CD14-positive monocyte (primary cell): ENCODE measurements at regions of chr5 and their contacts with region 1.

Region 1: GRCh38 chr5:83473346-83474163 is 2.0 kb downstream of the VCAN start:
- DNase-seq: peak; percentile 76 to 78 (median 77)
- H3K4me3 ChIP-seq: peak overlapping the region; percentile 78 to 95 (median 81)
- H3K4me3 Mint-ChIP-seq: peak overlapping the region; percentile 100
- H3K27ac ChIP-seq: peak overlapping the region; percentile 85 to 91
- H3K27ac Mint-ChIP-seq: peak overlapping the region; percentile 93 to 99 (median 98)
- H3K4me1 ChIP-seq: peaks cover 37 to 61% of the 10 kb centered on the region in 2 donors
- H3K4me1 Mint-ChIP-seq: peaks cover 61% of the 10 kb centered on the region
- H3K27me3 ChIP-seq: peaks cover 7 to 18% of the 10 kb centered on the region in 2 donors
- H3K27me3 Mint-ChIP-seq: peaks cover 13 to 17% (median 13%) of the 10 kb centered on the region in 3 donors
- CTCF ChIP-seq: peak; percentile 91

Region 2: DNA sequence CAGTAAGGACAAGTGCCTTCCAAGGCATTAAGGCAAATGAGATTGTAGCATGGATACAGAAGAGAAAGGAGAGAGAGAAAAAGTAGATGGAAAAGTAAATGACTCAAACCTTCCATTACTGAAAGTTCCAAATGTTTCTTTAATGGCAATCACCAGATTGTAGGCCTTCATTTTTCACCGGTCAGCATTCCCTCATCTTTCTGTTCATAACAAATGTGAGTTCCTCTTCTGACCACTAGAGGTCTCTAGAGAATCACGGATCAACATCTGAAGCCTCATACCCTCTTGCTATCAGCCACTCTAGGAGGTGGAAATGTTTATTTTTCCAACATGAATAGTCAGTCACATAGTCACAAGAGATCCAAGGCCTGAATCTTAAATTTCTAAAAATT is 1121.8 kb before region 1 on chr5:
- intact Hi-C with region 1: loop called (anchors 5 kb)
- DNase-seq: peak; percentile 22 to 55 (median 46)
- H3K4me3 ChIP-seq: no peak overlapping the region
- H3K4me3 Mint-ChIP-seq: no peak overlapping the region
- H3K27ac ChIP-seq: no peak overlapping the region
- H3K27ac Mint-ChIP-seq: no peak overlapping the region
- H3K4me1 ChIP-seq: peaks cover under 1 to 4% of the 10 kb centered on the region in 2 donors
- H3K4me1 Mint-ChIP-seq: peaks cover 12% of the 10 kb centered on the region
- H3K27me3 ChIP-seq: no peaks in the 10 kb centered on the region
- H3K27me3 Mint-ChIP-seq: peaks cover 1% of the 10 kb centered on the region in 3 donors
- CTCF ChIP-seq: peak; percentile 93

Region 3: DNA sequence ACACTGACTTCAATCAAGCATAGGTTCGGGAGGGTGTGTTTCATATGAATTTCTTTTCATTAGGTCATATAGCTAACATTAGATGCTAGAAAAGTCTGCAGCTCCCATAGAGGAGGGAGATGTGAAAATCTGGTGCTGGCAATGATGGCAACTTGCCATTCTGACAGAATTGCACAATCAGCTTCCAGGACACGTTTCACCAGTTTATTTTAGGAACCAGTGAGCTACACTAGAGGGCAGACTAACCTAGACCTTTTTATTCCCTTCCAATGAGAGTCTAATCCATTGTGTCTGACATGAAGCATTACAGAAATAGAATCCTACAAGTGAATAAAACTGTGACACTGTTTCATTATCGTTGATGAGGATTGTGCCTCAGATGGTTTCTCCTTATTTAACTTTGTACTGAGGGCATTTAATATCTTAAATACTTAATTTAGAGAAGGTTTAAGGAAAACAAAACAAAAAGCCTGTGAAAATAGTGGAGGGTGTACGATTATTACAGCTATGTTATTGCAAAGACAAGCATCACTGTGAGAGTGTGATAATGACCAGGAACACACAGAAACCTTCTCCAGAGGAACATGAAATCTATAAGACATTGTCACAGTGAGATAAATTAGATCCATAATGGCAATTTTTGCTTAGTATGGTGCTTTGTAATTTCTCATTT is 832.1 kb before region 1 on chr5:
- intact Hi-C with region 1: loop called (anchors 2 to 5 kb)
- DNase-seq: peak; percentile 57 to 72 (median 64)
- H3K4me3 ChIP-seq: no peak overlapping the region
- H3K4me3 Mint-ChIP-seq: no peak overlapping the region
- H3K27ac ChIP-seq: no peak overlapping the region
- H3K27ac Mint-ChIP-seq: no peak overlapping the region
- H3K4me1 ChIP-seq: peaks cover 2 to 5% of the 10 kb centered on the region in 2 donors
- H3K4me1 Mint-ChIP-seq: peaks cover 8% of the 10 kb centered on the region
- H3K27me3 ChIP-seq: no peaks in the 10 kb centered on the region
- H3K27me3 Mint-ChIP-seq: peaks cover 0 to 5% (median 0%) of the 10 kb centered on the region in 3 donors
- CTCF ChIP-seq: peak; percentile 82

Region 4: DNA sequence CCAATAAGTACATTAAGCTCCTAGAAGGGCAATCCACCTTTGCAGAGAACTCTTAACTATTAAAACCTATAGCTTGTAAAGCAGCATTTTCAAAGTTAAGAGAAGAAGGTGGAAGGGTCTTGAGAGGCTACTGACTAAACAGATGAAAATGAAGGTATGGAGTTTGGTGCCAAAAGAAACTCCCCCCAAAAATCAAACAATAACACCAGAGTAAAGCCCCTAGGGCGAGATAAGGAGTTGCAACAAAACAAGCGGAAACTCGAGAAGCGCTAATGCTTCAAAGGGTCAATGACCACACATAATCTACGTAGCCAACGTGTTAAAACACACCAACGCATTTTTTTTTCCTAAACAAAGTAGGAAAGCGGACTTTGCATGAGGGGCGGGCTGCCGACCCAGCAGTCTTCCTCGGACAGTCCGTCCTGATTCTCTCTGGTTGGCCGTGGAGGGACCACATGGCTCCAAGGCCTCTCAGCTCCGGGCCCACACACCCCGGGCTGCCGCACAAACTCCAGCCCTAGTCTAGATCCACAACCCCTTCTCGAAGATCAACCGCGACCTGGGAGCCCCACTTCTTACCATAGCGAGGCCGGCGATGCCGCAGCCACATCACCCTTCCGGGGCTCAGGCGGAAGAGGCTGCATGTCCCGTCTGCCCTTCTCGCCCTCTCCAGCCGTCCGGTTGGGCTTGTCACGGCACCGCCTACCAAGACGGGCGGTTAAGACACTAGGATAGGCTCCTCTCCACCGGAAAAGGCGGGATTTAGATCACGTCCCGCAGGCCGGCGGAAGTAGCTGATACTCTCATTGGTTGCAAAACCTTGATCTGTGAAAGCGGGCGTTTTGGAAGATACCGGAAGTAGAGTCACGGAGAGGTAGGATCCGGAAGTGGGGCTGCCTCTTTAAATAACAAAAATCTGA is 396.6 kb before region 1 on chr5 and contains the starts of genes TMEM167A and XRCC4:
- intact Hi-C with region 1: loop called (anchors 5 kb)
- DNase-seq: peak; percentile 98 to 100 (median 99)
- H3K4me3 ChIP-seq: peak within 1 kb of the TSS; percentile 96
- H3K4me3 Mint-ChIP-seq: peak within 1 kb of the TSS; percentile 99
- H3K27ac ChIP-seq: peak within 1 kb of the TSS; percentile 89 to 99
- H3K27ac Mint-ChIP-seq: peak within 1 kb of the TSS; percentile 96 to 100 (median 99)
- H3K4me1 ChIP-seq: peaks cover 51 to 53% of the 10 kb centered on the region in 2 donors
- H3K4me1 Mint-ChIP-seq: peaks cover 66% of the 10 kb centered on the region
- H3K27me3 ChIP-seq: no peaks in the 10 kb centered on the region
- H3K27me3 Mint-ChIP-seq: no peaks in the 10 kb centered on the region
- CTCF ChIP-seq: no peak
- polyA plus RNA-seq, gene TMEM167A: 50.3 to 337 (median 288) TPM
- polyA plus RNA-seq, gene XRCC4: 4.0 to 21.8 (median 16.3) TPM

Region 5: GRCh38 chr5:83306572-83307241 is 166.8 kb before region 1 on chr5:
- intact Hi-C with region 1: loop called (anchors 10 kb)
- DNase-seq: peak; percentile 90 to 98 (median 95)
- H3K4me3 ChIP-seq: peak overlapping the region in 1 of 3 experiments; percentile 43
- H3K4me3 Mint-ChIP-seq: peak overlapping the region; percentile 6 to 19
- H3K27ac ChIP-seq: peak overlapping the region; percentile 29 to 83
- H3K27ac Mint-ChIP-seq: peak overlapping the region; percentile 88 to 96 (median 94)
- H3K4me1 ChIP-seq: peaks cover 32 to 61% of the 10 kb centered on the region in 2 donors
- H3K4me1 Mint-ChIP-seq: peaks cover 47% of the 10 kb centered on the region
- H3K27me3 ChIP-seq: no peaks in the 10 kb centered on the region
- H3K27me3 Mint-ChIP-seq: no peaks in the 10 kb centered on the region
- CTCF ChIP-seq: no peak

Region 6: GRCh38 chr5:83368319-83368718 is 105.2 kb before region 1 on chr5:
- intact Hi-C with region 1: loop called in 1 of 2 experiments (anchors 2 kb)
- DNase-seq: peak; percentile 95 to 98 (median 98)
- H3K4me3 ChIP-seq: peak overlapping the region in 1 of 3 experiments; percentile 60
- H3K4me3 Mint-ChIP-seq: peak overlapping the region; percentile 17 to 67
- H3K27ac ChIP-seq: peak overlapping the region; percentile 93 to 99
- H3K27ac Mint-ChIP-seq: peak overlapping the region; percentile 94 to 99 (median 97)
- H3K4me1 ChIP-seq: peaks cover 71 to 79% of the 10 kb centered on the region in 2 donors
- H3K4me1 Mint-ChIP-seq: peaks cover 62% of the 10 kb centered on the region
- H3K27me3 ChIP-seq: no peaks in the 10 kb centered on the region
- H3K27me3 Mint-ChIP-seq: peaks cover 0 to 3% (median 0%) of the 10 kb centered on the region in 3 donors
- CTCF ChIP-seq: no peak